Activated CD4-positive, alpha-beta T cell treated with anti-CD3 and anti-CD28 coated beads, Interleukin-2, amount 10 ng/mL, durations not matched to agents 7 days and 5 days (primary cell): ENCODE measurements at regions of chr16 and their contacts with region 1.

Region 1: DNA sequence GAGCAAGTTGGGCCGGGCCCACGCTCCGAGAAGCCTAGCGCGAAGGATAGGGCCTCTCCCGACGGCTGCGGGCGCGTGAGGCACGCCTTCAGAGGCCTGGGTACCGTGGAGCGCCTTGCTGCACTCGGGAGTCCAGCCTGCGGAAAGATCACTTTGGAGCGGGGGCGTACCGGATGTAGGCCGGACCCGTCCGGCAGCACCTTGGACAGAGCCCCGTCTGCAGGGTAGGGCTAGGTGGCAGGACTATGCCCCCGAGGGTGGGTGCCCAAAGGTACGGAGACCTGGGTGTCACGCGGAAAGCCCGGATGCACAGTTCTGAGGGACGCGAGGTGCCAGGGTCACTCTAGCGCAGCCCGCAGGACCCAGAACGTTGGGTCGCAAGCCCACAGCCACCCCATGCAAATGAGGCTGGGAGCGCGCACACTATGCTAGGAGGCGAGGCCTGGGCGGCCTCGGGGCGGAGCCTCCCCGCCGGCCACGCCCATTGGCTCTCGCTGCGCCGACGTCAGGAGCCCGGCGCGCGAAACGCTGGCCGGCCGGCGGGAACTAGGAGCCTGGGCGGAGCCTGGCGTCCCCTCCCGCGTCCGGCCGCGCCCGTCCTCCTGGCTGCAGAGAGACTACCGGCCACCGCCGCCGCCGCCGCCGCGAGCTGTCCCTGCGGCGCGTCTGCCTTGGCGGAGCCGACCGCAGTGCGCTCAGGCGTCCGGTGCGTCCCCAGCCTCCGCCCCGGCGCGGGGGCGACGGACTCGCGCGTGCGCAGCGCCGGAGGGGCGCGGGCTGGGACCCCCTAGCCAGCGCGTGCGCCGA is at the start of gene PAQR4:
- DNase-seq: peak; percentile 83
- H3K4me3 Mint-ChIP-seq: peak within 1 kb of the TSS; percentile 76
- H3K27ac Mint-ChIP-seq: peak within 1 kb of the TSS; percentile 73
- H3K4me1 Mint-ChIP-seq: peaks cover 40% of the 10 kb centered on the region
- H3K27me3 Mint-ChIP-seq: peaks cover 14% of the 10 kb centered on the region
- total RNA-seq, gene PAQR4: 49.7 to 50.9 TPM

Region 2: GRCh38 chr16:2933136-2933535 is 35.8 kb before region 1 on chr16:
- CTCF ChIA-PET with region 1: no interaction called
- POLR2A ChIA-PET with region 1: no interaction called
- DNase-seq: no peak
- H3K4me3 Mint-ChIP-seq: no peak overlapping the region
- H3K27ac Mint-ChIP-seq: no peak overlapping the region
- H3K4me1 Mint-ChIP-seq: peaks cover 7% of the 10 kb centered on the region
- H3K27me3 Mint-ChIP-seq: no peaks in the 10 kb centered on the region

Region 3: DNA sequence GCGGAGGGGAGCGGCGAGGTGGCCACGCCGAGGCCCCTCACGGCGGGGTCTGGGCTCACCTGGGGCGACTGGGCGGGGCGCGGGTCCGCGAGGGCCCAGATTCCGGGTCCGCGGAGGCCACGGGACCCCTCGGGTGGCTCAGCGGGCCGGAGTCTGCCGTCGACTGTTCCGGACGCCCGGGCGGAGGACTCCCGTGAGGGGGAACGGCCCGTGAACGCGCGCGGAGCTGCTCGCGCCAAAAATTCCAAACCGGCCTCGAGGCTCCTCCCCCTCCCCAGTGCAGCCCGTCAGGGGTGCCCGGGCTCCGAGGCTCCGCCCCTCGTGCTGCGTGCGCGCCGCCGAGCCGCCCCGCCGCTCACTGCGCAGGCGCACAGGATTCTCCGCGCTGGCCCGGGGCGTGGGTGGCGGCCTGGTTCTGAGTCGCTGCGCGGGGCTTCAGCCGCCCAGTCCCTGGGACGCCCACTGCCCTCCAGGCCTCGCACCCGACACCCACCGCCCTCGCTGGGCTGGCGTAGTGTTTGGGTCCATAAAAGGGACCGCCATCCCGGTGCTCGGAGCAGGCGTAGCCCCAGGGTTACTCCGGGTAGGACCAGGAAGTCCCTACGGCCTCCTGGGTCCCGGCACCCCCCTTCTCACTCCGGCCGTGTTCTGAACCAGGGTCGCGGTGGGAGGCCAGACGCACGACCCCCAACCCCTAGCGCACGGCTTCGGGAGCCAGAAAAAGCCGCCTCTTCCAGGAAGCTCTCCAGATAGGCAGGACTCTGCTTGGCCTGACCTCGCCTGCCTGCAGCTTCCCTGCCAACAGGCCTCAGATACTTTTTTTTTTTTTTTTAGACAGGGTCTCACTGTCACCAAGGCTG is 11.5 kb after region 1 on chr16 and contains the start of gene PKMYT1:
- CTCF ChIA-PET with region 1: interaction called, 19 read pairs
- POLR2A ChIA-PET with region 1: interaction called, 5 read pairs
- DNase-seq: peak; percentile 93
- H3K4me3 Mint-ChIP-seq: peak within 1 kb of the TSS; percentile 89
- H3K27ac Mint-ChIP-seq: peak within 1 kb of the TSS; percentile 92
- H3K4me1 Mint-ChIP-seq: peaks cover 44% of the 10 kb centered on the region
- H3K27me3 Mint-ChIP-seq: no peaks in the 10 kb centered on the region
- total RNA-seq, gene PKMYT1: 122 to 151 TPM

Region 4: DNA sequence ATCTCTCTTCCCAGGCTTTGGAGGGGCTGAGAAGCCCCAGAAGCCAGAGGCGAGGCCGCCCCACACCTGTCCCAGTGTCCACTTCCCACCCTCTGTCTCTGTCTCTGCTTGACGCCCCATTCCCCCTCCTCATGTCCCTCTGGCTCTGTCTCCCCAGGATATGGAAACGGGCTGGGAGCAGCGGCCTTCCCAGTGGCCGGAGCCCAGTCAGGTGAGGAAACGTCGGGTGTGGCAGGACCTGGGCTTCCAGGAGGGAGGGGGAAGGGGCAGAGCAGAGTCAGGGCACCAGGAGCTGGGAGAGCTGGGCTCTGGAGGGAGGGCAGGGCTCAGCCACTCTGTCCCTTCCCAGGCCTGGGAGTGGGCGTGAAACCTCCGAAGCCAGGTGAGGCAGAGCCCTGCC is 21.9 kb after region 1 on chr16:
- CTCF ChIA-PET with region 1: no interaction called
- POLR2A ChIA-PET with region 1: no interaction called
- DNase-seq: no peak
- H3K4me3 Mint-ChIP-seq: no peak overlapping the region
- H3K27ac Mint-ChIP-seq: no peak overlapping the region
- H3K4me1 Mint-ChIP-seq: no peaks in the 10 kb centered on the region
- H3K27me3 Mint-ChIP-seq: no peaks in the 10 kb centered on the region